Common myeloid progenitor, CD34-positive (primary cell): ENCODE measurements at regions of chr2 and their contacts with region 1.

Region 1: DNA sequence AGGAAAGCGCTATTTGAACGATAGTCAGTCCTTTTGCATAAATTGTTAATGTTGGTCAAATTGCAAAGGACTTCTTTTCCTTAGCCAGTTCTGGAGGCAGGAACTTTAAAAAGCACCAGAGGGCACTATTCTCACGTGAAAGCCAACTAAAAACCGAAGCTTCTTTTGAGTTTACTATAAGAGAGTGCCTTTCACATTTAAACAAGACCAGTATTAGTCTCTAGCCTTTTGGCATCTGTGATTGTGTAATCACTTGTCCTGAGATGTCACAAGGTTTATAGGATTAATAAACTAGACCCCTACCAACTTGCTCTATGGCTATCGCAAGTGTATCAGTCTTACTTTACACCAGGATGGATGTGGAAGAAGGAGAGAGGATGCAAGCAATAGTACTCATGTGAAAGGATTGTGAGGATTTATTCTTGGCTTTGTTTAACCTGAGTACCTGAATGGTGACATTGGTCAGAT is 14.4 kb upstream of the STAT4 start:
- DNase-seq: peak; percentile 41 to 74 (median 64)
- H3K4me3 ChIP-seq: peak overlapping the region in 1 of 7 experiments; percentile 2
- H3K27ac ChIP-seq: no peak overlapping the region
- H3K4me1 ChIP-seq: no peaks in the 10 kb centered on the region
- H3K27me3 ChIP-seq: no peaks in the 10 kb centered on the region

Region 2: GRCh38 chr2:191178806-191179514 is 13.8 kb after region 1 on chr2:
- CTCF ChIA-PET with region 1: interaction called, 17 read pairs
- POLR2A ChIA-PET with region 1: no interaction called
- DNase-seq: no peak
- H3K4me3 ChIP-seq: no peak overlapping the region
- H3K27ac ChIP-seq: no peak overlapping the region
- H3K4me1 ChIP-seq: no peaks in the 10 kb centered on the region
- H3K27me3 ChIP-seq: no peaks in the 10 kb centered on the region

Region 3: DNA sequence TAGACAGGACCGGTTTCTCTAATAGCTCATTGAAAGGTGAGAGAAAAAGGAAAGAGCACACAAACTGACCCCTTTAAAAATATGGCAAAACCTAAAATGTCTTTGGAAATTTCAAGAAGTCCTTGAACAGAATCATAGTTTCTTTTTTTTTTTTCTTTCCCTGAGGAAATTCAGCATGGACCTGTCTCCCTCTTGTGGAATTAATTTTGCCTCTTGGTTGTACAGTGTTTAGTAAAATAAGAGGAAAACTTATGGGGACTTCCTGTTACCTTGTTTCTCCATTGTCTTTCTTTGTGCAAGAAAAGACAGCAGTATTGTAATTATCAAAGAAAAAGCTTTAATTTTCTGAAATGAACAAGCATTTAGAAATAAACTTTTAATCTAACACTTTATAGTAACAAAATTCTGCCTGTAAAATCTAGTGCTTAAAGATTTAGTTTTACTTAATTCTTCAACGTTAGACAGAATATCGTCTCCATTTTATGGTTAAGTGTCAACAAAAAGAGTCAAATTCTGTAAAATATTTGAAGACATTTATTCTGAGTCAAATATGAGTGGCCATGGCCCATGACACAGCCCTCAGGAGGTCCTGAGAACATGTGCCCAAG is 336.5 kb after region 1 on chr2:
- CTCF ChIA-PET with region 1: interaction called, 28 read pairs
- POLR2A ChIA-PET with region 1: no interaction called
- DNase-seq: peak; percentile 18 to 28 (median 20)
- H3K4me3 ChIP-seq: no peak overlapping the region
- H3K27ac ChIP-seq: no peak overlapping the region
- H3K4me1 ChIP-seq: no peaks in the 10 kb centered on the region
- H3K27me3 ChIP-seq: no peaks in the 10 kb centered on the region

Region 4: DNA sequence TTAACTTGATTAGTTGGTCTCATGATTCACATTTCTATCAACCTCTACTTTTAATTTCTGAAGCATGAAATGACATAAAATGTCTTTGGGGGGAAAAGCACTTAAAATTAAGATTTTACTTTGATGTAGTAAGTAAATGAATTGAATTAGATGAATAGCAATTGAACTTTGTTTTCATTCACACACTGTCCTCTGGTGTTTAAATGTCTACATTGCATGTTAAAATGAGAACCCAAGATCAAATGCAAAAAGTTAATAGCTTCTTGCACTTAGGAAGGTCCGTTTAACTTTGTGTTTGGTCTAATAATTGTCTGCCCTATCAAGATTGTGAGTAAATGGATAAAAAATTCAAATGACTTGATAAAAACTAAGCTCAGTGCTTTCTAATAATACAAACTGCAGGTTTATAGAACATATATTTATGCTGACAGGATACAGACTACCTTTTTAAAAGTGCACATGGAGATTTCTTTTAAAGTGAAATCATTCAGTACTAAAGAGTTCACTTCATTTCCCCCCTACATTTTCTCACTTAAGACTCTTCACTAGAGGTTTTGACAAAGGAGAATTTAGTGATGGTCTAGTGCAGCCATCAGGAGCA is 356.5 kb after region 1 on chr2:
- CTCF ChIA-PET with region 1: interaction called, 25 read pairs
- POLR2A ChIA-PET with region 1: no interaction called
- DNase-seq: peak; percentile 29 to 59 (median 46)
- H3K4me3 ChIP-seq: no peak overlapping the region
- H3K27ac ChIP-seq: no peak overlapping the region
- H3K4me1 ChIP-seq: no peaks in the 10 kb centered on the region
- H3K27me3 ChIP-seq: no peaks in the 10 kb centered on the region